PC-9 (cell line): ENCODE measurements at regions of chr14 and their contacts with region 1.

Region 1: DNA sequence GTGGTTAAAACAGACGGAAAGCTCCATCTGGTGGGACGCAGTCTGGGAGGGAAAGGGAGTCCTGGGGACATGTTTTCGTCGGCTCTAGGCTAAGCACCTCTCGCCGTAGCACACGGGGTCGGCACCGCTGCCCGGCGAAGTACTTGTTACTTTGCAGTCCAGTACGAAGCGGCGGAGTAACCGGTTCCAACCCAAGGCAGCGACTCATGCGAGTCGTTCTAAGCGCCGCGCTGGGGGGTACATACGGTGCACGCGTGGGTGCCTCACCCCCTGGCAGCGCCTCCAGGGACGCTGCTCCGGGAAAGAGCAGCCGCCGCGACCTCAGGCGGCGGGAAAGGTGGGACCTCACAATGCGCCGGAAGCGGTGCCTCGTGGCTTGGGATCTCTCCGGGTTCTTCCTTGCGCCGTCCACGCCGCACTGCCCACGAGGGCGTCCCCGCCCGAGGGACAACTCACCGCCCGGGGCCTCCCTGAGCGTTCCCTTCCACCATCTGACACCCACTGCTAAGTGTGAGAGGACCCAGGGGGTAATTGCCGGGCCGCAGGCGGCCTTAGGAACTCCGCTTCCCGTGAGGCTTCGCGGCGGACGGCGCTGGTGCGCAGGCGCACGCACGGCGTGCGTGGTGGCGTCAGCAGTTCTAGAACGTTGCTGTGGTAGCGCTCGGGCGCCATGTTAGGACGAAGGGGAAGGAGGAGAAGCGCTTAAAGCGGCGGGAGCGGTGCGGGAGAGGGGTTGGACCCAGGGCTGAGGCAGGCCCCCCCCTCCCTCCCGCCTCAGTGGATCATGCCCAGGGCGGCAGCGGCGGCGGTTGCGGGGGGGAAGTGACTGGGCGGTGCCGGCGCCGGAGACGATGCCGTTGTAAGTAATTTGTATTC is at the start of gene PAPOLA:
- DNase-seq: peak; percentile 69 to 82
- H3K4me3 ChIP-seq: peak within 1 kb of the TSS; percentile 78
- H3K27ac ChIP-seq: peak within 1 kb of the TSS; percentile 44
- H3K4me1 ChIP-seq: peaks cover 16% of the 10 kb centered on the region
- H3K27me3 ChIP-seq: no peaks in the 10 kb centered on the region
- CTCF ChIP-seq: no peak
- total RNA-seq, gene PAPOLA: 59.5 and 68.4 TPM in 2 replicates

Region 2: GRCh38 chr14:96362965-96363756 is 138.8 kb before region 1 on chr14 and contains the starts of genes ATG2B and GSKIP:
- CTCF ChIA-PET with region 1: no interaction called
- POLR2A ChIA-PET with region 1: no interaction called
- intact Hi-C with region 1: loop called (anchors 5 kb)
- DNase-seq: peak; percentile 67 to 72
- H3K4me3 ChIP-seq: peak within 1 kb of the TSS; percentile 95
- H3K27ac ChIP-seq: peak within 1 kb of the TSS; percentile 16; the same call in 1 of the 2 replicates
- H3K4me1 ChIP-seq: peaks cover 21% of the 10 kb centered on the region
- H3K27me3 ChIP-seq: no peaks in the 10 kb centered on the region
- CTCF ChIP-seq: no peak
- total RNA-seq, gene ATG2B: 3.9 and 6.6 TPM in 2 replicates
- total RNA-seq, gene GSKIP: 7.2 and 13.4 TPM in 2 replicates